Heart right ventricle (tissue), 16 donors: ENCODE measurements at regions of chr13 and their contacts with region 1.

Region 1: GRCh38 chr13:71879129-71879535 is 12.1 kb upstream of the DACH1 start:
- DNase-seq: peak in 1 of 2 donors; percentile 11
- ATAC-seq: peak in 6 of 8 donors; percentile 75 to 88 (median 79)
- H3K4me3 ChIP-seq: peak overlapping the region in 2 of 10 donors; percentile 25 to 32
- H3K27ac ChIP-seq: peak overlapping the region in 3 of 10 donors; percentile 24 to 45 (median 36)
- H3K4me1 ChIP-seq: peaks cover 0 to 15% (median 4%) of the 10 kb centered on the region in 9 donors
- H3K27me3 ChIP-seq: no peaks in the 10 kb centered on the region
- CTCF ChIP-seq: peak; percentile 32 to 79 (median 62)

Region 2: GRCh38 chr13:71240911-71241310 is 638.2 kb before region 1 on chr13:
- intact Hi-C with region 1: loop called in 3 of 10 experiments (anchors 2 to 10 kb)
- DNase-seq: no peak
- ATAC-seq: peak in 6 of 8 donors; percentile 53 to 80 (median 66)
- H3K4me3 ChIP-seq: no peak overlapping the region
- H3K27ac ChIP-seq: no peak overlapping the region
- H3K4me1 ChIP-seq: peaks cover 0 to 35% (median 8%) of the 10 kb centered on the region in 9 donors
- H3K27me3 ChIP-seq: no peaks in the 10 kb centered on the region
- CTCF ChIP-seq: peak in 8 of 9 donors; percentile 36 to 72 (median 48)

Region 3: DNA sequence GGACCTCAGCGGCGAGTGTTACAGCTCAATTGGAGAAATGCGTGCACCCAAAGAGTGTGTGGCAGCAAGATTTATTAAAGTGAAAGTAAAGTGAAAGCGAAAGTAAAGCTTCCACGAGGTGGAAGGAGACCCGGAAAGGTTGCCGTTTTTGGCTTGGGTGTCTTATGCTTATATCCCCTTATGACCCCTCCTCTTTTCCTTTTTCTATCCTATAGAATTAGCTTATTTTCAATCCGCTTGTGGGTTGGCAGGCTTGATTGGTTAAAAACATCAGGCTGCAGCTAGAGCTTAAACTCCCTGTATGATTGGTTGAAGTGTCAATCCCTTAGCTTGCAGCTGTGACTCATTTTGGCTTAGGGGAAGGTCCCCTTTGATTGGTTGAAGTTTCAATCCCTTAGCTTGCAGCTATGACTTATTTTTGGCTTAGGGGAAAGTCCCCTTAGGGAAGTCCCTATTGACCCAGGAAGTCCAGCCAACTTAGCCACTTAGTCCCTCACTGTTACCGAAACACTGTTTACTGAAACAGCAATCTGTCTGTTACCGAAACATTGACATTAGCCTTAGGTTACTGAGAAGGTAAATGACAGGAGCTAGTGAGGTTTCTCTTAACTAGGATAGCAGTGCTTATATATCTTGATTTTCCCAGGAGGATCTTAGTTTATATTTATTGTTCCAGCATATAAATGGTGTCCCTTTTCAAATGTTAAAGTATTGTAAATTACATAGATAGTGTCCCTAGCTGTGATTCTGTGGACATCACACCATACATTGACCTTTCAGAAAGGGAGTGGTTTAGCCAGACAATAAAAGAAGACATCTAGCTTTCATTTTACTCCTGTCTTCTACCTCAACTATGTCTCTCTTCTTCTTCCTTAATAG is 587.9 kb before region 1 on chr13:
- intact Hi-C with region 1: loop called in 3 of 10 experiments (anchors 5 to 10 kb)
- DNase-seq: peak in 1 of 2 donors; percentile 55
- ATAC-seq: peak in 6 of 8 donors; percentile 42 to 74 (median 69)
- H3K4me3 ChIP-seq: peak overlapping the region; percentile 10 to 58 (median 50)
- H3K27ac ChIP-seq: peak overlapping the region; percentile 11 to 80 (median 58)
- H3K4me1 ChIP-seq: peaks cover 0 to 11% (median 3%) of the 10 kb centered on the region in 9 donors
- H3K27me3 ChIP-seq: no peaks in the 10 kb centered on the region
- CTCF ChIP-seq: no peak

Region 4: DNA sequence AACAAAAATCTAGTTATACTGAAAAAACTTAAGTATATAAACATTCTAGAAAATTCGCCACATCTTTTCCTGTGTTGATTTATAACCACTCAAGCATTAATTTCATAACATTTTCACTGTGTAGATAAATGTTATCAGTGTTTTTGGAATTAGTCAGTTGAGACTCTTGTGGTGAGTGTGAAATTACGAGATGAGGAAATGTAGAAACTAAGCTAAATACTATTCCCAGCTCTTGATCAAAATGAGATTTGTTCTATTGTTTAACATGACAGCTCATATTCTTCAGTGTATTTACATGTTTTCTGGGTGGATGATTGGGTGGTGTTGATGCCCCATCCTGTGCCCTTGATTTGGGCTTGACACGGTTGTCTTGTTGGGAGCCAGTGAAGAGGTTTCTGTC is 418.9 kb before region 1 on chr13:
- intact Hi-C with region 1: loop called in 1 of 10 experiments (anchors 10 kb)
- DNase-seq: no peak
- ATAC-seq: peak in 1 of 8 donors; percentile 38
- H3K4me3 ChIP-seq: no peak overlapping the region
- H3K27ac ChIP-seq: no peak overlapping the region
- H3K4me1 ChIP-seq: peaks cover 0 to 16% (median 7%) of the 10 kb centered on the region in 9 donors
- H3K27me3 ChIP-seq: no peaks in the 10 kb centered on the region
- CTCF ChIP-seq: no peak

Region 5: GRCh38 chr13:72230131-72230530 is 351.0 kb after region 1 on chr13:
- intact Hi-C with region 1: no loop called
- DNase-seq: no peak
- ATAC-seq: no peak
- H3K4me3 ChIP-seq: no peak overlapping the region
- H3K27ac ChIP-seq: no peak overlapping the region
- H3K4me1 ChIP-seq: no peaks in the 10 kb centered on the region
- H3K27me3 ChIP-seq: no peaks in the 10 kb centered on the region
- CTCF ChIP-seq: no peak

Region 6: DNA sequence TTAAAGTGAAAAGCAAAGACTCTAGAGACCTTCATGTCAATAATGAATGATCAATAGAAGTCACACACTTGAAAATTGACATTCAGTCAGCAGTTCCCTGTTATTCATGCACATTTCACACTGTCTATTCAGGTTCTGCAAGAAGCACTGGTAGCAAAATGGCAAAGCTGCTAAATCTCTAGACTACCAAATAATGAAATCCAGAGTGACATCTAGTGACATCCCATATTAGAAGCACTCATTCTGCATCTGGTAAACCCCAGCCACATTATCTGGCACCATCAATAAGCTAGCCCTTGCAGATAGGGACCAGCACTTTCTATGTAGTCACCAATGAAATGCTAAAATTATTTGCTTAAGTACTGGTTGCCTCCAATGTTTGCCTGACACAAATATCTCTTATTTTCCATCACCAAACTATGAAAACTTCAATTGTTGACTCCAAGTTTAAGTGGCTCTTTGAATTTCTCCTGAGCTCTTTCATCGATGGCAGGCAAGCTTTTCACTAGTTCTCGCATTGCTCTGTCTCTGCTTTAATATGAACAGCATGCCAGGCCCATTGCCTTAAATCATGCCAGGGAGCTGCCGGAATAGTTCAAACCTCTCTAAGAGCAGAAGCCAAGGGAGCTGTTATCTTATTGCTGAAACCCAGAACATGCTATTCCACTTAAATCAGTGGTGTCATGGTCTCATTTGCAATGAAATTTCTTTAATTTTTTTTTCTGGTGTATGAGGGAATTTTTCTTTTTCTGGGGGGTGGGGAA is 438.4 kb after region 1 on chr13:
- intact Hi-C with region 1: no loop called
- DNase-seq: no peak
- ATAC-seq: no peak
- H3K4me3 ChIP-seq: no peak overlapping the region
- H3K27ac ChIP-seq: no peak overlapping the region
- H3K4me1 ChIP-seq: no peaks in the 10 kb centered on the region
- H3K27me3 ChIP-seq: peaks cover 0 to 5% (median 0%) of the 10 kb centered on the region in 7 donors
- CTCF ChIP-seq: no peak